ENCODE measurements at regions of chr1 and their contacts with region 1.

Region 1: GRCh38 chr1:212857992-212858460 is at the start of gene FLVCR1:
- DNase-seq: peak; percentile 100
- H3K4me3 Mint-ChIP-seq: no peak within 1 kb of the TSS
- H3K27ac Mint-ChIP-seq: peak within 1 kb of the TSS; percentile 99
- H3K4me1 Mint-ChIP-seq: peaks cover 11% of the 10 kb centered on the region
- H3K27me3 Mint-ChIP-seq: no peaks in the 10 kb centered on the region
- CTCF ChIP-seq: no peak
- total RNA-seq, gene FLVCR1: 16.5 and 17.9 TPM in 2 replicates

Region 2: GRCh38 chr1:212469701-212470458 is 388.1 kb before region 1 on chr1:
- CTCF ChIA-PET with region 1: no interaction called
- POLR2A ChIA-PET with region 1: interaction called, 10 read pairs
- intact Hi-C with region 1: loop called (anchors 5 kb)
- DNase-seq: peak; percentile 96
- H3K4me3 Mint-ChIP-seq: peak overlapping the region; percentile 49
- H3K27ac Mint-ChIP-seq: peak overlapping the region; percentile 90
- H3K4me1 Mint-ChIP-seq: peaks cover 10% of the 10 kb centered on the region
- H3K27me3 Mint-ChIP-seq: no peaks in the 10 kb centered on the region
- CTCF ChIP-seq: no peak

Region 3: DNA sequence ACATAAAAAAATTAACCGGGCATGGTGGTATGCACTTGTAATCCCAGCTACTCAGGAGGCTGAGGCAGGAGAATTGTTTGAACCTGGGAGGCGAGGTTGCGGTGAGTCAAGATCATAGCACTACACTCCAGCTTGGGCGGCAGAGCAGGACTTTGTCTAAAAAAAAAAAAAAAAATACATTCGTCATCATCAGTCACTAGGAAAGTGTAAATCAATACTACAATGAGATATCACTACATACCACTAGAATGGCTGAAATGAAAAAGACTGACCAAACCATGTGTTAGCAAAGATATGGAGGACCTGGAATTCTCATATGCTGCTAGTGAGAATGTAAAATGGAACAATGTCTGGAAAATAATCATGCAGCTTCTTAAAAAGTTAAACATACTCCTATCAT is 19.9 kb before region 1 on chr1:
- CTCF ChIA-PET with region 1: interaction called, 4 read pairs
- POLR2A ChIA-PET with region 1: interaction called, 15 read pairs
- intact Hi-C with region 1: no loop called
- DNase-seq: no peak
- H3K4me3 Mint-ChIP-seq: no peak overlapping the region
- H3K27ac Mint-ChIP-seq: no peak overlapping the region
- H3K4me1 Mint-ChIP-seq: no peaks in the 10 kb centered on the region
- H3K27me3 Mint-ChIP-seq: no peaks in the 10 kb centered on the region
- CTCF ChIP-seq: no peak

Region 4: DNA sequence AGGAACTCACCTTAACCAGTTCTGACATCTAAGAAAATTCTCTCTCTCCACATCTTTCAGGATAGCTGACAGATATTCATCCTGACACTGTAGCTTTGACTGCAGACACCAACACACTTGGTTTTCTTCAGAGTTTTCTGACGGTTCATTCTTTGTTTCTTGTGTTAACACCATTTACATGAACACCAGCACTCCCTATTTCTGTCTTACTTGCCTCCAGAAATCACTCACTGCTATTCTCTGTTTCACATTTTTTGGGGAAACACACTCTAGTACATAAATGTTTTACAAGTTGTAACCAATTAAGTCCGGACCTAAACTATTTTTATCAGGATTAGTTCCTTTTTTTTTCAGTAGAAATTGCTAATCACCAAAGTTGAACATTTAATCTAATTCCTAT is 15.5 kb after region 1 on chr1:
- CTCF ChIA-PET with region 1: interaction called, 13 read pairs
- POLR2A ChIA-PET with region 1: interaction called, 44 read pairs
- intact Hi-C with region 1: no loop called
- DNase-seq: no peak
- H3K4me3 Mint-ChIP-seq: no peak overlapping the region
- H3K27ac Mint-ChIP-seq: peak overlapping the region; percentile 7
- H3K4me1 Mint-ChIP-seq: peaks cover 17% of the 10 kb centered on the region
- H3K27me3 Mint-ChIP-seq: no peaks in the 10 kb centered on the region
- CTCF ChIP-seq: no peak

Region 5: DNA sequence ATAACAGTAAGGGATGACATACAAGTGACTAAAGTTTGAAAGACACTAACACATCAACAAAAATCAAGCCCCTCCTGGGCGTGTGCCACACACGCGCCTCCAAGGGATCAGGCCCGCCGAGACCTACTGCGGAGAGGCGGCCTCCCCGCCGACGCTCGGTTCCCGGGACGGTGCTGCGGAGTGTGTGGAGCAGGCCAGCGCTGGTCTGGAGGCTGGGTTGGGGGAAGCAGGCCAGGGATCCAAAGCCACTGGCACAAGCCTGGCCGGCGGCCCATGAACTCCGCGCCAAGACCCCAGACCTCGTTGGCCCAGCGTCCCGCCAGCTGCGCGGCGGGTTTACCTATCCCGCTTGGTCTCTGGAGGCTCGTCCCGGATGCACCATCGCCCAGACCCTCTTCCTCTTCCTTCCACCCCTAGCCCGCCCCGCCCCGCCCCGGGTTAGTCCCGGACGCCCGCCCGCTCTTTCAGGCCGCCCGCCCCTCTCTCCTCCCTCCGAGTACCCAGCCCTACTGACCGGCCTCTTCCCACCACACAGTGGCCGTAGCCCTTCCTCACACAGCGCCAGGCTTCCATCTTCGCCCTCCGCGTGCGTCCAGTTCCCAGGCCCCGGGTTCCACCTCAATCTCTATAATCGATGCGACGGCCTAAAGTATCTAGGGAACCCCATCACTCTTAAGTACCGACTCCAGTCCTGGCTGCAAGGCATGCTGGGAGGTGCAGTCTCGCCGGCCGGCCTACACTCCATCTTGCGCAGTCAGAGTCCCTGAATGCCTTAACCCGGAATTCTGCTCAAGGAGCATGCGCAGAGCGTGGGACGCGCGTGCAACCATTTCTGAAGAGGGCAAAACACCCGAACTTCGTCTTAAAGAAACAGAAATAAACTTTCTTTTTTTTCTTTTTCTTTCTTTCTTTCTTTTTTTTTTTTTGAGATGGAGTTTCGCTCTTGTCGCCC is 157.3 kb after region 1 on chr1 and contains the start of gene ANGEL2:
- CTCF ChIA-PET with region 1: no interaction called
- POLR2A ChIA-PET with region 1: interaction called, 16 read pairs
- intact Hi-C with region 1: no loop called
- DNase-seq: peak; percentile 100
- H3K4me3 Mint-ChIP-seq: peak within 1 kb of the TSS; percentile 91
- H3K27ac Mint-ChIP-seq: peak within 1 kb of the TSS; percentile 84
- H3K4me1 Mint-ChIP-seq: peaks cover 13% of the 10 kb centered on the region
- H3K27me3 Mint-ChIP-seq: no peaks in the 10 kb centered on the region
- CTCF ChIP-seq: no peak
- total RNA-seq, gene ANGEL2: 87.1 and 89.7 TPM in 2 replicates